GM12878 (cell line): ENCODE measurements at regions of chr5 and their contacts with region 1.

Region 1: GRCh38 chr5:94968507-94969095 is 316.3 kb downstream of the MCTP1 start:
- DNase-seq: peak; percentile 26
- ATAC-seq: peak; percentile 78
- H3K4me3 ChIP-seq: no peak overlapping the region
- H3K27ac ChIP-seq: no peak overlapping the region
- H3K4me1 ChIP-seq: no peaks in the 10 kb centered on the region
- H3K27me3 ChIP-seq: no peaks in the 10 kb centered on the region
- CTCF ChIP-seq: peak; percentile 38 to 60 (median 55); a peak in 5 of 6 replicates
- EP300 ChIP-seq: no peak
- POLR2A ChIP-seq: no peak
- RAD21 ChIP-seq: peak; percentile 86

Region 2: GRCh38 chr5:94857111-94857510 is 111.5 kb before region 1 on chr5:
- CTCF ChIA-PET with region 1: no interaction called
- POLR2A ChIA-PET with region 1: no interaction called
- RAD21 ChIA-PET with region 1: no interaction called
- SMC1A ChIA-PET with region 1: no interaction called
- in situ Hi-C with region 1: no loop called
- intact Hi-C with region 1: no loop called
- DNase-seq: no peak
- ATAC-seq: no peak
- H3K4me3 ChIP-seq: no peak overlapping the region
- H3K27ac ChIP-seq: no peak overlapping the region
- H3K4me1 ChIP-seq: no peaks in the 10 kb centered on the region
- H3K27me3 ChIP-seq: no peaks in the 10 kb centered on the region
- CTCF ChIP-seq: no peak
- EP300 ChIP-seq: no peak
- POLR2A ChIP-seq: no peak
- RAD21 ChIP-seq: no peak

Region 3: DNA sequence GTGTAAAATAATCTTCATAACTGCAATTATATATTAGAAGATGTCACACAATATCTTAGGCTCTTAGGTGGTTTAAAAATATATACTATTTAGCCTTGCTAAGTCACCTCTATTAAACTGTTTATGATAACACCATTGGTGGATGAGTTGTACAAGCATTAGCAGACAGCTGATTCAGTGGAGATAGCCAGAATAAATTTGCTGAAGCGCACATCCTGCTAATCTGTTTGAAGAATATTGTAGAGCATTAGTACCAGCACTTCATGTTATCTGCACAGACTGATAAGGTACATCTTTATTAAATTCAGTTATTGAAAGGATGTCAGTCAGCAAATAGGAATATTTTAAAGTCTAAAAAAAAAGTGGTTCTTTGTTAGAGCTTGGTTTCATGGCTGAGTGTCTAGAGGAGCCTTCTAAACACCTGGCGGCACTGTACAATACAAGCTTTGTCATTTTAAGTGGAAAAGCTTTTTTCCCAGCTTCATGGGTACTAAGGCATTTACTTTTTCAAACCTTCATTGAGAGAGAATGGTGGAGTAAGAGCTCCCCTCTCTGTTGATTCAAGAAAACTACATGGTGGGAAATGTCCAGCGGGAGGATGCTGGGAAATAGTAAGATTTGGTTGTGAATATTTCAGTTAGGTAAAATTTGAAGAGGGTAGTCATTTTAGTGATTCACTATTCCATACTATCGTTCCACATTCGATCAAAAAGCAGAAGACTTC is 75.0 kb before region 1 on chr5:
- CTCF ChIA-PET with region 1: no interaction called
- POLR2A ChIA-PET with region 1: no interaction called
- RAD21 ChIA-PET with region 1: no interaction called
- SMC1A ChIA-PET with region 1: no interaction called
- in situ Hi-C with region 1: no loop called
- intact Hi-C with region 1: no loop called
- DNase-seq: no peak
- ATAC-seq: no peak
- H3K4me3 ChIP-seq: no peak overlapping the region
- H3K27ac ChIP-seq: no peak overlapping the region
- H3K4me1 ChIP-seq: no peaks in the 10 kb centered on the region
- H3K27me3 ChIP-seq: no peaks in the 10 kb centered on the region
- CTCF ChIP-seq: peak; percentile 11 to 21 (median 18); a peak in 2 of 6 replicates
- EP300 ChIP-seq: no peak
- POLR2A ChIP-seq: no peak
- RAD21 ChIP-seq: peak; percentile 48; the same call in 1 of the 2 replicates

Region 4: DNA sequence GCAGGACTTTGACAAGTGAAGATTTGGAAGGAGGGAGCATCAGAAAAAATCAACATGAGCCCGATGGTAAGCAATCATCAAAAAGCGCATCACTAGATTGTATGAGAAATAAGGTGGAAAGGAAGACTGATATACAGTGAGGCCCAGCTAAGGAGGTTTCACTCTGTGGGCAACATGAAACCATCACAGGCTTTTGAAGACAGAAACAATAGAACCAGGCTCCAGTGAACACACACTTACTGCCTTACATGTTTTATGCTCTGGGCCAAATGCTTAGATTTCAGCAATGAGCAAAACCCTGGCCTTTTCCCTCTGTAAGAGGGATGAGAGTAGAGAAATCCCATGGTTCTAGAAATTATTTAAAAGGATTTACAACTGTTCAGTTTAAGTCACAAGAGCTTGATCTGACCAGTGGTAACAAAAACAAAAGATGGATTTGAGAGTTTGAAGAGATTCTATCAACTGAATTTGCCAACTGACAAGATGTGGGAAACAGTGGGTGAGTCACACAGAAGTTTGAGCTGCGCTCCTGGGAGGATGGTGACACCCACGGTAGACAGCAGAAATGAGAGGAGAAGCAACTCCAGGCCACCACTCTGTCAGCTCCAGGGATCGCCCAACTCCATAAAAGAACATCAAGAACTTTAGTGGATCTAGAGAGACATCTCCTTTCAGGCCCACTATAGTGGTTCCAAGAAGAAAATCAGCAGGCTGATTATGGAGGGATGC is 54.5 kb after region 1 on chr5:
- CTCF ChIA-PET with region 1: interaction called, 15 read pairs
- POLR2A ChIA-PET with region 1: no interaction called
- RAD21 ChIA-PET with region 1: interaction called, 5 read pairs
- SMC1A ChIA-PET with region 1: interaction called, 16 read pairs
- in situ Hi-C with region 1: no loop called
- intact Hi-C with region 1: no loop called
- DNase-seq: peak; percentile 66
- ATAC-seq: peak; percentile 89
- H3K4me3 ChIP-seq: peak overlapping the region; percentile 32; the same call in 1 of the 2 replicates
- H3K27ac ChIP-seq: peak overlapping the region; percentile 40
- H3K4me1 ChIP-seq: peaks cover 30% of the 10 kb centered on the region
- H3K27me3 ChIP-seq: no peaks in the 10 kb centered on the region
- CTCF ChIP-seq: no peak
- EP300 ChIP-seq: no peak
- POLR2A ChIP-seq: no peak
- RAD21 ChIP-seq: no peak

Region 5: DNA sequence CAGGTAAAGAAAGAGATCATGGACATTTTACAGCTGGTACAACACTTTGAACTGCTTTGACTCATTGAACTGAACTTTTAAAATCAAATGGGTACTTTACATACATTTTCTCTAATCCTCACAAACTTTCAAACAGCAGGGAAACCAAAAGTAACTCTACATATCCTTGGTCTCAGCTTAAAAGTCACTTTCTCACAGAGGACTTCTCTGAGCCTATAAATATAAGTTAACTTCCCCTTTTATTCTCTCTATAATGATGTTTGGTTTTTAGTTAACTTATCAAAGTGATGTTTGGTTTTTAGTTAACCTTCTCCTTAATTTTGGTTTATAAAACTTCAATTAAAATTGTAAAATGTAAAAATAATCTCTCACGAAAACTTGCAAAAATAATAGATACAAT is 106.5 kb after region 1 on chr5:
- CTCF ChIA-PET with region 1: interaction called, 24 read pairs
- POLR2A ChIA-PET with region 1: no interaction called
- RAD21 ChIA-PET with region 1: interaction called, 20 read pairs
- SMC1A ChIA-PET with region 1: interaction called, 13 read pairs
- in situ Hi-C with region 1: no loop called
- intact Hi-C with region 1: loop called (anchors 2 kb)
- DNase-seq: no peak
- ATAC-seq: peak; percentile 34
- H3K4me3 ChIP-seq: peak overlapping the region; percentile 9; the same call in 1 of the 2 replicates
- H3K27ac ChIP-seq: peak overlapping the region; percentile 70
- H3K4me1 ChIP-seq: peaks cover 30% of the 10 kb centered on the region
- H3K27me3 ChIP-seq: no peaks in the 10 kb centered on the region
- CTCF ChIP-seq: no peak
- EP300 ChIP-seq: no peak
- POLR2A ChIP-seq: no peak
- RAD21 ChIP-seq: no peak

Region 6: GRCh38 chr5:95087816-95088317 is 119.3 kb after region 1 on chr5:
- CTCF ChIA-PET with region 1: interaction called, 13 read pairs
- POLR2A ChIA-PET with region 1: no interaction called
- RAD21 ChIA-PET with region 1: interaction called, 6 read pairs
- SMC1A ChIA-PET with region 1: interaction called, 5 read pairs
- in situ Hi-C with region 1: no loop called
- intact Hi-C with region 1: no loop called
- DNase-seq: peak; percentile 85
- ATAC-seq: peak; percentile 90
- H3K4me3 ChIP-seq: peak overlapping the region; percentile 20; the same call in 1 of the 2 replicates
- H3K27ac ChIP-seq: peak overlapping the region; percentile 88
- H3K4me1 ChIP-seq: peaks cover 16% of the 10 kb centered on the region
- H3K27me3 ChIP-seq: no peaks in the 10 kb centered on the region
- CTCF ChIP-seq: no peak
- EP300 ChIP-seq: peak; percentile 83 to 86; a peak in 3 of 4 replicates
- POLR2A ChIP-seq: no peak
- RAD21 ChIP-seq: no peak

Region 7: DNA sequence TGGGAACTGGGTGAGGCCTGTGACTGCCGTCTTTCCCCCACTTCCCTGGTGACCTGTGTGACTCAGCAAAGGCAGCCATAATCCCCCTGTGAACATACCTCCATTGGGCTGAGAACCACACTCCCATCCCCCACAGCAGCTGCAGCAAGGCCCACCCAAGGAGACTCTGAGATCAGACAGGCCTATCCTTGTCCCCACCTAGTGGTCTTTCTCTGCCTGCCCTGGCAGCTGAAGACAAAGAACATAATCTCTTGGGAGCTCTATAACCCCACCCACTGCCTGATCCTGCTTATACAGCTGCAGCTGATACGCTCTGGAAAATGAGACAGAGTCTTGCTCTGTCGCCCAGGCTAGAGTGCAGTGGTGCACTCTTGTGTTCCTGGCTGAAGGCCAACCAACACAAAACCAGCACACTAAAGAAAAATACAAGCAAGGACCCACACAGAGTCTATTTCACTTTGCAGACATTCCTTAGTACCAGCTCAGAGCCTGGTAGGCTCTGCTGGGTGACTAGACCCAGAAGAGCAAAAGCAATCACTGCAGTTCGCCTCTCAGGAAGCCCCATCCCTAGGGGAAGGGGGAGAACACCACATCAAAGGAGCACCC is 209.5 kb after region 1 on chr5:
- CTCF ChIA-PET with region 1: interaction called, 64 read pairs
- POLR2A ChIA-PET with region 1: no interaction called
- RAD21 ChIA-PET with region 1: interaction called, 9 read pairs
- SMC1A ChIA-PET with region 1: interaction called, 26 read pairs
- in situ Hi-C with region 1: no loop called
- intact Hi-C with region 1: loop called (anchors 2 kb)
- DNase-seq: peak; percentile 12
- ATAC-seq: peak; percentile 88
- H3K4me3 ChIP-seq: no peak overlapping the region
- H3K27ac ChIP-seq: no peak overlapping the region
- H3K4me1 ChIP-seq: no peaks in the 10 kb centered on the region
- H3K27me3 ChIP-seq: no peaks in the 10 kb centered on the region; a peak in 1 of 4 replicates
- CTCF ChIP-seq: peak in 2 of 3 experiments; percentile 16 to 28; a peak in 2 of 6 replicates
- EP300 ChIP-seq: no peak
- POLR2A ChIP-seq: no peak
- RAD21 ChIP-seq: 0 out of 2 replicates have a peak, but pooled peaks have one; percentile 6

Region 8: GRCh38 chr5:95238560-95239325 is 270.1 kb after region 1 on chr5:
- CTCF ChIA-PET with region 1: interaction called, 94 read pairs
- POLR2A ChIA-PET with region 1: no interaction called
- RAD21 ChIA-PET with region 1: interaction called, 23 read pairs
- SMC1A ChIA-PET with region 1: interaction called, 51 read pairs
- in situ Hi-C with region 1: no loop called
- intact Hi-C with region 1: loop called (anchors 2 kb)
- DNase-seq: no peak
- ATAC-seq: peak; percentile 64
- H3K4me3 ChIP-seq: no peak overlapping the region
- H3K27ac ChIP-seq: no peak overlapping the region
- H3K4me1 ChIP-seq: no peaks in the 10 kb centered on the region
- H3K27me3 ChIP-seq: no peaks in the 10 kb centered on the region
- CTCF ChIP-seq: peak; percentile 24 to 54 (median 26); a peak in 5 of 6 replicates
- EP300 ChIP-seq: no peak
- POLR2A ChIP-seq: no peak
- RAD21 ChIP-seq: peak; percentile 58

Region 9: DNA sequence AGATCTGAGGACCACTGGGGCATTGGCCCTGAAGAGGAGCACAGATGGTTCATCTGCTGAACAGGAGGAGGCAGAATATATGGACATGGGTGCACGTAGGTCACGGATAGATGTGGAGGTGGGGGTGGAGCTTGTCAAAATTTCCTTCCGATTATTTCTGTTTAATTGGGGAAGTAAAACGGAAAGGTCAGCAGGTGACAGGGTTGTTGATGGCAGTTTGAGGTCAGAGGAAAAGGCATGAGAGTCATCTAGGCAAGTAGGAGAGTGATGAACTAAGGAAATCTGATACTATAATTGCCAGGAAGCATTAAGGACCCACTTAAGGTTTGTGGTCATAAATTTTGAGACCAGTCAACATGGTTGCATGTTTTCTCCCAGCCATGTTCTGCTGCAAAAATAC is 414.2 kb after region 1 on chr5:
- CTCF ChIA-PET with region 1: no interaction called
- POLR2A ChIA-PET with region 1: no interaction called
- RAD21 ChIA-PET with region 1: no interaction called
- SMC1A ChIA-PET with region 1: no interaction called
- in situ Hi-C with region 1: no loop called
- intact Hi-C with region 1: no loop called
- DNase-seq: no peak
- ATAC-seq: no peak
- H3K4me3 ChIP-seq: no peak overlapping the region
- H3K27ac ChIP-seq: no peak overlapping the region
- H3K4me1 ChIP-seq: no peaks in the 10 kb centered on the region
- H3K27me3 ChIP-seq: no peaks in the 10 kb centered on the region
- CTCF ChIP-seq: no peak
- EP300 ChIP-seq: no peak
- POLR2A ChIP-seq: no peak
- RAD21 ChIP-seq: no peak

Region 10: DNA sequence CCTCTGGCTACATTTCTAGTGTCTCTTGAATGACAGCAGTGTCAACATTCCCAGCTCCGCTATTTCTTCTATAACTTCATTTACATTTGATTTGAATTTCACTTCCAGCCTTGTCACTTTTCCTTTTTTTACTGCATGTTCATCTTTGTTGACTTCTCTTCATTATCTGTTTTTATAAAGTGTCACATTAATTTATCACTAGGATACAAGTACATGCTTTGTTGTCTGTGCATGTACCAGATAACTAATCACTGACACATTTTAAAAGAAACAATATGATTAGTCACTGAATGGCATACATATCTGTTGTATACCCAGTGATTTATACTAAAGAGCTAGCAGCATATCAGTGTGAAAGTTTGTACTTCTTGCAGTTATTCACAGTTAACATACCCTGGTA is 615.4 kb after region 1 on chr5:
- CTCF ChIA-PET with region 1: no interaction called
- POLR2A ChIA-PET with region 1: no interaction called
- RAD21 ChIA-PET with region 1: no interaction called
- SMC1A ChIA-PET with region 1: no interaction called
- in situ Hi-C with region 1: no loop called
- intact Hi-C with region 1: no loop called
- DNase-seq: no peak
- ATAC-seq: no peak
- H3K4me3 ChIP-seq: no peak overlapping the region
- H3K27ac ChIP-seq: no peak overlapping the region
- H3K4me1 ChIP-seq: no peaks in the 10 kb centered on the region
- H3K27me3 ChIP-seq: no peaks in the 10 kb centered on the region
- CTCF ChIP-seq: no peak
- EP300 ChIP-seq: no peak
- POLR2A ChIP-seq: no peak
- RAD21 ChIP-seq: no peak